H1 (cell line): ENCODE measurements at regions of chr17 and their contacts with region 1.

Region 1: DNA sequence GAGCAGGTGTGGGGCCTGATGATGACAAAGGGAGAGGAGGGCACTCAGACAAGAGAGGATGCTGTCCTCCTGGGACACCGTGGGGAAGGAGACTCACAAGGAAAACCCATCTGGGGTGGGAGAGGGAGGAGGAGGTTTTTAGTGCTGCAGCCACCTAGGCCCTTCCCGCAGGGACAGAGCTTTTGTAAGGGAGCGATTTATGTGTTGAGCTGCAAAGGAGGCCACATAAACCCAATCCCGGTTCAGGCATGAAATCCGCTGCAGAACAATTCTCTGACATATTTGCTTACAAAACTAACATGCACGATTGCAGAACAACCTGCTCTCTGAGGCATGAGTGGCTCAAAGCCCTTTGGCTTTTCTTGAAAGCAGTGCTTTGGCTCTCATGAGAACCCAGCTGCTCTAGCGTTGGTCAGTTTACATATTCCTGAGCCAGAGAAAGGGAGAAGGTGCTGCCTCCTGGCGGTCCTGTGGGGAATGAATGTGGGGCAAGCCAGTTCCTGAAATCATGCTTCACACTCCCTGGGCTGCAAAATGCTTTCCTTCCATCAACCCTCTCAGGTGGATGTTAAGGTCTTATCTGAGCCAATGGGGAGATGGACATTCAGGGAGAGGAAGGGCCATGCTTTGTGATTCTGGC is 122.4 kb upstream of the NLRP1 start:
- DNase-seq: peak in 1 of 2 experiments; percentile 90
- H3K4me3 ChIP-seq: no peak overlapping the region
- H3K27ac ChIP-seq: no peak overlapping the region
- H3K4me1 ChIP-seq: peaks cover 4 to 19% (median 11%) of the 10 kb centered on the region in 4 experiments; a peak in 5 of 7 replicates
- H3K27me3 ChIP-seq: no peaks in the 10 kb centered on the region
- CTCF ChIP-seq: peak; percentile 87 to 98 (median 92)
- EP300 ChIP-seq: no peak
- POLR2A ChIP-seq: no peak
- RAD21 ChIP-seq: peak; percentile 82 to 92

Region 2: GRCh38 chr17:5598457-5598856 is 108.2 kb before region 1 on chr17:
- CTCF ChIA-PET with region 1: interaction called, 35 read pairs
- POLR2A ChIA-PET with region 1: no interaction called
- DNase-seq: no peak
- H3K4me3 ChIP-seq: no peak overlapping the region
- H3K27ac ChIP-seq: no peak overlapping the region
- H3K4me1 ChIP-seq: no peaks in the 10 kb centered on the region; a peak in 1 of 7 replicates
- H3K27me3 ChIP-seq: no peaks in the 10 kb centered on the region; a peak in 1 of 7 replicates
- CTCF ChIP-seq: no peak
- EP300 ChIP-seq: no peak
- POLR2A ChIP-seq: no peak
- RAD21 ChIP-seq: no peak

Region 3: GRCh38 chr17:5638586-5638985 is 68.1 kb before region 1 on chr17:
- CTCF ChIA-PET with region 1: interaction called, 11 read pairs
- POLR2A ChIA-PET with region 1: no interaction called
- DNase-seq: no peak
- H3K4me3 ChIP-seq: no peak overlapping the region
- H3K27ac ChIP-seq: no peak overlapping the region
- H3K4me1 ChIP-seq: no peaks in the 10 kb centered on the region
- H3K27me3 ChIP-seq: no peaks in the 10 kb centered on the region; a peak in 1 of 7 replicates
- CTCF ChIP-seq: no peak
- EP300 ChIP-seq: no peak
- POLR2A ChIP-seq: no peak
- RAD21 ChIP-seq: no peak

Region 4: DNA sequence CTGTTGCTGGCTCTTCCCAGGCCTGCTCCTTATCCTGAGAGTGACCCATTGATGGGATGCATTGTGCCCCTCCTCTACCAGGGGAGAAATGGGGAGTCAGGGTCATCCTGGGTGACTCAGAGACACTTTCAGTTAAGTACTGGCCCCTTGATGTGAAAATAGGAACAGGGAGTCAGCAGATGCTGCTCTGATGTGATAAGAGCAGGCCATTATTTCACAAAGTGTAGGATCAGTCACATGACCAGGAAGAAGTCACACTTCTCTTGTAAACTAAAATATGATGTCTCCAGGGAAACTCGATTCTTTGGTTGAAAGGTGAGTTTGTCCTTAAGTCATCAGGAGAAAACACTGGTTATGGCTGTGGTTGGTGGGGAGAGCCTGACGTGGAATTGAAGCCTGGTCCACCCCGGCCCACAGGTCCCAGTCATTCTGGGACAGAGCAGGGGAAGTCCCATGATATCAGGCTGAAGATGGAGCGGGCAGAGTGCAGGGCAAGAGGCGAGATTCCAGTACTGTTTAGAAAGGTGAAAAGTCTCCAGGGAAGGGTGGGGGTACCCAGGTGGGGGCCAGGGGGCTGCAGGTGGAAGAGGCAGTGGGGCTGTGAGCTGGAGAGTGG is 33.8 kb before region 1 on chr17:
- CTCF ChIA-PET with region 1: interaction called, 26 read pairs
- POLR2A ChIA-PET with region 1: no interaction called
- DNase-seq: no peak
- H3K4me3 ChIP-seq: no peak overlapping the region
- H3K27ac ChIP-seq: no peak overlapping the region
- H3K4me1 ChIP-seq: no peaks in the 10 kb centered on the region
- H3K27me3 ChIP-seq: no peaks in the 10 kb centered on the region
- CTCF ChIP-seq: no peak
- EP300 ChIP-seq: no peak
- POLR2A ChIP-seq: no peak
- RAD21 ChIP-seq: no peak

Region 5: GRCh38 chr17:5747271-5747670 is 40.6 kb after region 1 on chr17:
- CTCF ChIA-PET with region 1: no interaction called
- POLR2A ChIA-PET with region 1: no interaction called
- DNase-seq: no peak
- H3K4me3 ChIP-seq: no peak overlapping the region
- H3K27ac ChIP-seq: no peak overlapping the region
- H3K4me1 ChIP-seq: no peaks in the 10 kb centered on the region
- H3K27me3 ChIP-seq: no peaks in the 10 kb centered on the region
- CTCF ChIP-seq: peak; percentile 8 to 39 (median 26); a peak in 3 of 4 replicates
- EP300 ChIP-seq: no peak
- POLR2A ChIP-seq: no peak
- RAD21 ChIP-seq: peak; percentile 22 to 38; a peak in 3 of 4 replicates

Region 6: GRCh38 chr17:5769593-5770354 is 63.1 kb after region 1 on chr17:
- CTCF ChIA-PET with region 1: interaction called, 16 read pairs
- POLR2A ChIA-PET with region 1: interaction called, 4 read pairs
- DNase-seq: no peak
- H3K4me3 ChIP-seq: no peak overlapping the region
- H3K27ac ChIP-seq: no peak overlapping the region
- H3K4me1 ChIP-seq: peaks cover 3 to 12% (median 7%) of the 10 kb centered on the region in 4 experiments
- H3K27me3 ChIP-seq: no peaks in the 10 kb centered on the region; a peak in 4 of 7 replicates
- CTCF ChIP-seq: no peak
- EP300 ChIP-seq: no peak
- POLR2A ChIP-seq: no peak
- RAD21 ChIP-seq: no peak

Region 7: DNA sequence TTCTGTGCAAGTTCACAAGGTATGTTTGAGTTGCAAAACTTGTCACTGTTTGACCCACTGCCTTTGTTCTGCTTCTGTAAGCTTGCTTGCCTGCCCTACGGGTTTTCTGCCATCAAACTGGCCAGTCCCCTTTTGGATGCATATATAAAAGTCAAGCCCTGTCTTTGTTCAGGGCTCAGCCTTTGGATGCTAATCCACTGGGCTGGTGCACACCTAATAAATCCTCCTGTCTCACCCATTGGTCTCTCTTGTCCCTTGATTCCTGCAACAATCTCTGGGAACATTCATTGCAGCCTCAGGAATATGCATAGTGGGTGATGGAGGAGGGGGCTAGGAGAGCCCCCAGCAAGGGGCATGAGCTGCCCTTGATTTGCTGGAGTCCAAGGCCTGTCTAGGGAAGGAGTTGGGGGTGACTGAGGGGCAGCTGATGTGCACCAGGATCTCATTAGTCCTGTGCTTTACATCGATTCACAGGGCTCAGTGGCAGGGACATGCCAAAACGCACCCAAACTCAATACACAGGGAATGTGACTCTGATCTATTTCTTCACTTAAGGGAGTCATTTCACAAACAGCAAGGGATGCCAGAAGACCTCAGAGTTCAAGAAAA is 103.0 kb after region 1 on chr17:
- CTCF ChIA-PET with region 1: no interaction called
- POLR2A ChIA-PET with region 1: no interaction called
- DNase-seq: no peak
- H3K4me3 ChIP-seq: no peak overlapping the region
- H3K27ac ChIP-seq: no peak overlapping the region
- H3K4me1 ChIP-seq: peaks cover 0 to 6% (median 2%) of the 10 kb centered on the region in 4 experiments; a peak in 4 of 7 replicates
- H3K27me3 ChIP-seq: no peaks in the 10 kb centered on the region
- CTCF ChIP-seq: no peak
- EP300 ChIP-seq: peak in 1 of 2 experiments; percentile 72; a peak in 1 of 3 replicates
- POLR2A ChIP-seq: no peak
- RAD21 ChIP-seq: no peak

Region 8: DNA sequence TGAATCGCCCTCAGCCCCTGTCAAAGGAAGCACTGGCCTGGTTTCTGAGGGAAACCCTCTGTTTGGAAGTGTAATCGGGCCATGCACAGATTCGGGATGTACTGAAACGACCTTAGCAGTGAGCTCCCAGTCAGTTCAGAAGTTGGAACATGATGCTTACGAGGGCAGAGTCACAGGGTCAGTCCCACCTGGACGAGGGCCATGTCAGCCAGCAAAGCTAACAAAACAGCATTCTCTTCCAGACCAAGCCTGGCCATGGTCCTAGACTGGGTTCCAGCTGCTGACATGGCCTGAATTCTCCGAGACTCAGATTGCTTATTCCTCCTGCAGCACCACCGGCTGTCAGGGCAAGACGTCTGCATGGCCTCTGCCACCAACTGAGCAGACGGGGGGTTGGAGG is 171.3 kb after region 1 on chr17:
- CTCF ChIA-PET with region 1: no interaction called
- POLR2A ChIA-PET with region 1: no interaction called
- DNase-seq: no peak
- H3K4me3 ChIP-seq: no peak overlapping the region
- H3K27ac ChIP-seq: no peak overlapping the region
- H3K4me1 ChIP-seq: no peaks in the 10 kb centered on the region
- H3K27me3 ChIP-seq: no peaks in the 10 kb centered on the region
- CTCF ChIP-seq: no peak
- EP300 ChIP-seq: no peak
- POLR2A ChIP-seq: no peak
- RAD21 ChIP-seq: no peak

Region 9: DNA sequence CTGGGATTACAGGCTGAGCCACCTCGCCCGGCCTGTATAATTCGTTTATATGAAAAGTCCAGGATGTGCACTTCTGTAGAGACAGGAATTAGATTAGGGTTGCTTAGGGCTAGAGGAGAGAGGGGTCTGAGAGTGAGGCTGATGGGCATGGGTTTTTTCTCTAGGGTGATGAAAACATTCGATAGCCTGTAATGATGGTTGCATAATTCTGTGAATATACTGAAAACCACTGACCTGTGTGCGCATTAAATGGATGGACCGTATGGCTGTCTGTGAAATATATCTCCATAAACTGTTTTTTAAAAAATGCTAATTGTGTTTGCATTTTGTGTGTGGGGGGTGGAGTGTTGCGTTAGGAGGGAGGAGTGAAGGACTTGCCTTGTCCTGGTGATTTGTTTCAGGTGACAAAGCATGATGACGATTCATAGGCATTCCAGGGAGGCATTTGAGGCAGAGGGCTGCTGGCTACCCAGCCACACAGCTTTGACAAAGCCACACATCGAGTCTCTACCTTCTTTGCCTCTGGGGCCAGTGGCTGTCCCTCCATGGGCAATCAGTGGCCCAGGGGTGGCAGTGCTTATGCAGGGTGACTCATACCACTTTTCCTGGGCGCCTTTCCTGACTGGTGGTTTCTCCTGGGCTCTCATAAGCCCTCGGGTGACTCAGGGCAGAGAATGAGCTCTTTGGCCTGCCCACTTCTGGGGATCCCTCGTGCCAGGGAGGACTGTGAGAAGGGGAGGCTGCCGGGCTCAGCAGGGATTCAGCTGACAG is 215.0 kb after region 1 on chr17:
- CTCF ChIA-PET with region 1: no interaction called
- POLR2A ChIA-PET with region 1: no interaction called
- DNase-seq: no peak
- H3K4me3 ChIP-seq: no peak overlapping the region
- H3K27ac ChIP-seq: no peak overlapping the region
- H3K4me1 ChIP-seq: peaks cover 3 to 8% (median 4%) of the 10 kb centered on the region in 4 experiments
- H3K27me3 ChIP-seq: no peaks in the 10 kb centered on the region
- CTCF ChIP-seq: no peak
- EP300 ChIP-seq: no peak
- POLR2A ChIP-seq: no peak
- RAD21 ChIP-seq: no peak